Dendritic cell treated with granulocyte-macrophage colony-stimulating factor and Interleukin-4, amounts not matched to agents 40 ng/mL and 50 ng/mL, for 4 days (primary cell): ENCODE measurements at regions of chr2 and their contacts with region 1.

Region 1: DNA sequence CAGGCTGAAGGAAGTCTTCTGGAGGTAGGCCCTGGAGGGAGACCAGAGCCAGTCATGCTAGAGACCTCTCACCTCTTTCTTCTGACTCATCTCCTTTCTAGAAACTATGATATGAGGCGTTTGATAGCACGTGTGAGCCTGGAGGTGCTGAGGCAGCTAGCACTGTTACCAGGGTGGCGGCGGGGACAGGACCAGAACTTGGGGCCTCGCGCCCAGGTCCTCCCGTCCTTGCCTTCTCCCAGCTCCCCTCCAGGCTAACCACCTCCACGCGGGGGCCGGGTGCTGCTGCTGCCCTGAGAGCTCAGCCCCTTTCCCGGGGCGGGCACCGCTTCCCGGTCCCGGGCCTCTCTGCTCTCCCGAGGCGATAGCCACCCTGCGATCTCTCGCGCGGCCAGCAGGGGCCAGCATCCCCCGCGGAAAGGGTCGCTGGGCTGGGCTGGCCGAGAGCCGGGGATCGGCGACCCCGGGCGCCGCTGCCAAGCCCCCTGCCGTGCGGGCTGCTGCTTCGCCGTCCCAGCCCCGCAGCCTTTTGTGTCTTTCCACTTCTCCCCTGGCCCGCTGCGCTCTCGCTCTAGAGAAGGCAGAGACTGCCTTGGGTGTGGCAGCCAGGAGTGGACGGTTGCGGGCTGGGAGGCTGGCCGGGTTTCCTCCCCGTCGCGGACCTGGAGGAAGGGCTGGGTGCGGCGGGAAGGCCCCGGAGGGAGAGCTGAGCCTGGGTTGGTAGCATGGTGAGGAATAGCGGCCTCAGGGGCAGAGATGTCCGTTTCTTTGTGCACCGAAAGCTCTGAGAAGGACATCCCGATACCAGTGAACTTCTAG is 49.1 kb downstream of the TMEM17 start:
- H3K4me3 Mint-ChIP-seq: peak overlapping the region; percentile 70
- H3K27ac Mint-ChIP-seq: peak overlapping the region; percentile 34
- H3K4me1 Mint-ChIP-seq: peaks cover 13% of the 10 kb centered on the region
- H3K27me3 Mint-ChIP-seq: peaks cover 17% of the 10 kb centered on the region

Region 2: DNA sequence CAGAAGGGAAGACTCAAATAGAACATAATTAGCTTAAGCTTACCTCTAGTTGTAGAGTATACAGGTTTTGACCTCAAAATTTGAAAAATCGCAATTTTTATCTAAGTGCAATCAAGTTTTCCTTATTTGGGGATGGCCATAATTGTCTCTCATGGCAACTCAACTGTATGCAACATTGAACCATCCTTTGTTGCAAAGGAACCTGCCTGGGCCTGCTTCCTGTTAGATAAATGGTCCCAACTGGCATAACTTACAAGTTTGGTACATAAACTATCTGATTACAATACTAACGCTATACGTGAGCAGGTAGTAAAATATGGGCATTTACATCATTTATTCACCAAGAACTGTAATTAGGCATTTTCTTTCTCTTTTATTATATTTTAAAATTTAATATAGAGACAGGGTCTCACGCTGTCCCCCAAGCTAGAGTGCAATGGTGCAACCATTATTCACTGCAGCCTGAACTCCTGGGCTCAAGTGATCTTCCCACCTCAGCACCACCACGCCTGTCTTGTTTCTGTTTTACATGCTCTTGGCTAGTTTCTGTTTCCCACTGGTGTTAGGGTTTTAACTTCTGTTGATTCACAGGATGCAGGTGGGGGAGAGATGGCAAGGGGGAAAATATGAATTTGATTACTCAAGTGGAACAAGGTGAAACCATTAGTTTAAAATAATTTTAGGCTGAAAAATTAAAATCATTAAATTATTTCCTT is 316.3 kb before region 1 on chr2:
- intact Hi-C with region 1: no loop called
- H3K4me3 Mint-ChIP-seq: no peak overlapping the region
- H3K27ac Mint-ChIP-seq: no peak overlapping the region
- H3K4me1 Mint-ChIP-seq: peaks cover 11% of the 10 kb centered on the region
- H3K27me3 Mint-ChIP-seq: no peaks in the 10 kb centered on the region

Region 3: GRCh38 chr2:62774555-62775366 is 317.8 kb after region 1 on chr2:
- intact Hi-C with region 1: loop called (anchors 1 kb)
- H3K4me3 Mint-ChIP-seq: no peak overlapping the region
- H3K27ac Mint-ChIP-seq: no peak overlapping the region
- H3K4me1 Mint-ChIP-seq: peaks cover 14% of the 10 kb centered on the region
- H3K27me3 Mint-ChIP-seq: no peaks in the 10 kb centered on the region

Region 4: GRCh38 chr2:62801814-62802523 is 345.0 kb after region 1 on chr2:
- intact Hi-C with region 1: no loop called
- H3K4me3 Mint-ChIP-seq: no peak overlapping the region
- H3K27ac Mint-ChIP-seq: no peak overlapping the region
- H3K4me1 Mint-ChIP-seq: no peaks in the 10 kb centered on the region
- H3K27me3 Mint-ChIP-seq: no peaks in the 10 kb centered on the region

Region 5: DNA sequence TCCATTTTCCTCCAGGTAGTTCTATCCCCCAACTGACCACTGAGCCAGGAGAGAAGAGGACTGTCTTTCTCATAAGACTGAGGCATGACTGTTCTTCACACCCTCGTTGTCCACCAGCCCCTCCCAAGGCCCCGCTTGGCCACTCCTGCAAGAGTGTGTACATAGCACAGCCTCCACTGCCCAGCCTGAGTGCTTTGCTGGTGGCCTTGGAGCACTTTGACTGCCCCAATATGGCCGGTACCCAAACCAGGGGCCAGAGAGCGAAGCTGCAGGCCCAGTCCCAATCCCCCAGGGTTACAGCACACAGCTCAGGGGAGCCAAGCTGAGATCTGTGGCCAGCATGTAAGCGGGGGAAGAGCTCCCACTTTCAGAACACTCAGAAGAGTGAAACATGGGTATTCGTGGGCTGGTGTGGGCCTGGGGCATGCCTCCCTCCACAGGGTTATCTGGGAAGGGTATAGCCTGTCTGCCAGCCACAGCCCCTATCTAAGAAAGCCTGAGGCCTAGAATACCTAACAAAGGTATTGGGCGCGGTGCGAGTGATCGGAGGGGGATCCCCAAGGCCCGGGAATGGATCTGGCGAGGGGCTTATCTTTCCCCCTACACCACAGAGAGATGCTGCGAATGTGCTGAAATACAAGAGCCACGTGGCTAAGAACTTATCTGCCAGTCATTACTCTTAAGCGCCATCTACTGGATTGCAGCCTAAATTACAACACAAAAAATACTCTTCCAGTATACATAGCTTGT is 967.6 kb after region 1 on chr2:
- intact Hi-C with region 1: loop called (anchors 2 kb)
- H3K4me3 Mint-ChIP-seq: no peak overlapping the region
- H3K27ac Mint-ChIP-seq: no peak overlapping the region
- H3K4me1 Mint-ChIP-seq: no peaks in the 10 kb centered on the region
- H3K27me3 Mint-ChIP-seq: no peaks in the 10 kb centered on the region

Region 6: GRCh38 chr2:63488118-63488713 is 1031.3 kb after region 1 on chr2:
- intact Hi-C with region 1: loop called (anchors 5 kb)
- H3K4me3 Mint-ChIP-seq: no peak overlapping the region
- H3K27ac Mint-ChIP-seq: no peak overlapping the region
- H3K4me1 Mint-ChIP-seq: no peaks in the 10 kb centered on the region
- H3K27me3 Mint-ChIP-seq: no peaks in the 10 kb centered on the region

Region 7: GRCh38 chr2:63544017-63544627 is 1087.2 kb after region 1 on chr2:
- intact Hi-C with region 1: loop called (anchors 5 kb)
- H3K4me3 Mint-ChIP-seq: no peak overlapping the region
- H3K27ac Mint-ChIP-seq: no peak overlapping the region
- H3K4me1 Mint-ChIP-seq: no peaks in the 10 kb centered on the region
- H3K27me3 Mint-ChIP-seq: no peaks in the 10 kb centered on the region